Kidney (tissue), 22 donors: ENCODE measurements at regions of chr9 and their contacts with region 1.

Region 1: GRCh38 chr9:114677418-114677817 is 4.6 kb downstream of the TEX48 start:
- DNase-seq: peak in 3 of 5 donors; percentile 22 to 80 (median 54)
- H3K4me3 ChIP-seq: no peak overlapping the region
- H3K27ac ChIP-seq: no peak overlapping the region
- H3K4me1 ChIP-seq: no peaks in the 10 kb centered on the region
- H3K27me3 ChIP-seq: no peaks in the 10 kb centered on the region
- CTCF ChIP-seq: no peak

Region 2: GRCh38 chr9:114559830-114560513 is 117.4 kb before region 1 on chr9:
- intact Hi-C with region 1: no loop called
- DNase-seq: peak in 3 of 5 donors; percentile 26 to 66 (median 60)
- H3K4me3 ChIP-seq: no peak overlapping the region
- H3K27ac ChIP-seq: no peak overlapping the region
- H3K4me1 ChIP-seq: no peaks in the 10 kb centered on the region
- H3K27me3 ChIP-seq: no peaks in the 10 kb centered on the region
- CTCF ChIP-seq: no peak

Region 3: DNA sequence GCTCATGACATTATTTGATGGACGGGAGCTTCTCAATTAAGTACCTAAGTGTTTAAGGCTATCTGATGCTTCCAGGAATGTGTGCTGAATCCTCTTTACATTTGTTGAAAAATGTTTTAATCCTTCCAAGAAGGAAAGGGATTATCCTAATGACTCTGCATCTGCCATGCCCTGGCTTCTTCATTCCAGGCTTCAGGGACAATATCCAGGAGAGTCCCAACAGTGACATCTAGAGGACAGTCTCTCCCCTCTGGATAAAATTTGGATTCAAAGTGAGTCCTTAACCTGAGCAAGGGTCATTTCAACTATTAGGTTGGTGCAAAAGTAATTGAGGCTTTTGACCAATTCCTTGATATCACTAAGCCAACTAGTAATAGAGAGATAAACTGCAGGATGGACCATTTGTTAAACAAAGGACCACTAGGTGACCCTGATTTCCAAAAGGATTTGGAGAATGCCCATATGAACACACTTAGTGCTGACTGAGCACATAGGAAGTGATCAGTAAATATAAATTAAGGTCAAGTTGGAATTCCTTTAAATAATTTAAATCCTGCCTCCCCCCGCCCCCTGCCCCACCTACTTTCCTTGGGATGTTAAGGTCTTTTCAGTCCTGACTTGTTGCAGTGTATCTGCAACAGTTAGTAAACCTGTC is 233.9 kb after region 1 on chr9:
- intact Hi-C with region 1: loop called (anchors 10 kb)
- DNase-seq: peak in 2 of 5 donors; percentile 58 to 72
- H3K4me3 ChIP-seq: no peak overlapping the region
- H3K27ac ChIP-seq: no peak overlapping the region
- H3K4me1 ChIP-seq: peaks cover 0 to 3% (median 0%) of the 10 kb centered on the region in 3 donors
- H3K27me3 ChIP-seq: no peaks in the 10 kb centered on the region
- CTCF ChIP-seq: peak; percentile 76